GM12878 (cell line): ENCODE measurements at regions of chr6 and their contacts with region 1.

Region 1: GRCh38 chr6:154156135-154156896 is 117.3 kb downstream of the OPRM1 start:
- DNase-seq: no peak
- ATAC-seq: peak; percentile 79
- H3K4me3 ChIP-seq: peak overlapping the region; percentile 35; the same call in 1 of the 2 replicates
- H3K27ac ChIP-seq: peak overlapping the region; percentile 64
- H3K4me1 ChIP-seq: peaks cover 16% of the 10 kb centered on the region
- H3K27me3 ChIP-seq: no peaks in the 10 kb centered on the region; a peak in 1 of 4 replicates
- CTCF ChIP-seq: peak; percentile 55 to 73 (median 64)
- EP300 ChIP-seq: no peak
- POLR2A ChIP-seq: no peak
- RAD21 ChIP-seq: peak; percentile 71

Region 2: GRCh38 chr6:154092326-154092962 is 63.9 kb before region 1 on chr6:
- CTCF ChIA-PET with region 1: no interaction called
- POLR2A ChIA-PET with region 1: no interaction called
- RAD21 ChIA-PET with region 1: no interaction called
- SMC1A ChIA-PET with region 1: no interaction called
- in situ Hi-C with region 1: no loop called
- intact Hi-C with region 1: no loop called
- DNase-seq: no peak
- ATAC-seq: no peak
- H3K4me3 ChIP-seq: no peak overlapping the region
- H3K27ac ChIP-seq: no peak overlapping the region
- H3K4me1 ChIP-seq: no peaks in the 10 kb centered on the region
- H3K27me3 ChIP-seq: no peaks in the 10 kb centered on the region
- CTCF ChIP-seq: no peak
- EP300 ChIP-seq: no peak
- POLR2A ChIP-seq: no peak
- RAD21 ChIP-seq: no peak

Region 3: GRCh38 chr6:154169193-154169847 is 13.0 kb after region 1 on chr6:
- CTCF ChIA-PET with region 1: interaction called, 3 read pairs
- POLR2A ChIA-PET with region 1: no interaction called
- RAD21 ChIA-PET with region 1: interaction called, 6 read pairs
- SMC1A ChIA-PET with region 1: interaction called, 13 read pairs
- in situ Hi-C with region 1: no loop called
- intact Hi-C with region 1: no loop called
- DNase-seq: no peak
- ATAC-seq: no peak; the same call in 2 of the 3 replicates
- H3K4me3 ChIP-seq: no peak overlapping the region
- H3K27ac ChIP-seq: no peak overlapping the region
- H3K4me1 ChIP-seq: peaks cover 6% of the 10 kb centered on the region
- H3K27me3 ChIP-seq: no peaks in the 10 kb centered on the region
- CTCF ChIP-seq: no peak
- EP300 ChIP-seq: no peak
- POLR2A ChIP-seq: no peak
- RAD21 ChIP-seq: no peak

Region 4: DNA sequence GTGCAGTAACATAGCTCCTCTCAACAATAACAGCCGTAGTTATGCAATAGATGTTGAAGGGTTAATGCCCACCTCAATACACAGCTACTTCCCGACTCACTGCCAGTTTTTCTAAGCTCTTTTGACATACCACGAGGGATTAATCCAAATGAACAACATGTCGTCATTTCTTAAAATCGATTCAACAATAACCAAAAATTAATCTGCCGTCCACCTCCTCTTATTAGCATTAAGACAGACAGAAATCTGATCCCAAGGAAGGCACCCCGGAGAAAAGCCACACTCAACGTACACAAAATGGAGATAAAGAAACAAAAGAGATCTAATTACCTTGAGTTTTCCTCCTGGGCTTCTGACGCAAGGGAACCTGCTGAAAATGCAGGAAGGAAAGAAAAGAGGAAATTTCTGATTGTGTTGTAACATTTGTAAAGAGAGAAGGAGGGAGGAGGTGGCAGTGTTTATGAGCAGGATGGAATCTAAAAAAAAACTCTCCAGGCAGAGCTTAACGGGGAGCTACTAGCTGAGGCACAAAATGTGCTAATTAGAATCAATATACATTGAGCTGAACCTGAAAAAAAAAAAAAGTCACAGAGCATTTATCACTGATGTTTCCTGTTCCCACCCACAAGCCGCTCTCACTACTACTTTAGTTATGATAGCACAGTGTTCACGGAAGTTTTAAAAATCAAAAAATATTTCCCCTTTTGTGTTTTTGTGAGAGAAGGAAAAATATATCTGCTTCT is 91.0 kb after region 1 on chr6:
- CTCF ChIA-PET with region 1: interaction called, 11 read pairs
- POLR2A ChIA-PET with region 1: interaction called, 4 read pairs
- RAD21 ChIA-PET with region 1: interaction called, 33 read pairs
- SMC1A ChIA-PET with region 1: interaction called, 59 read pairs
- in situ Hi-C with region 1: no loop called
- intact Hi-C with region 1: loop called (anchors 2 kb)
- DNase-seq: no peak
- ATAC-seq: peak; percentile 59
- H3K4me3 ChIP-seq: peak overlapping the region; percentile 76
- H3K27ac ChIP-seq: peak overlapping the region; percentile 86
- H3K4me1 ChIP-seq: peaks cover 26% of the 10 kb centered on the region
- H3K27me3 ChIP-seq: no peaks in the 10 kb centered on the region
- CTCF ChIP-seq: no peak
- EP300 ChIP-seq: peak; percentile 60 to 73
- POLR2A ChIP-seq: no peak
- RAD21 ChIP-seq: no peak

Region 5: GRCh38 chr6:154258064-154258757 is 101.9 kb after region 1 on chr6:
- CTCF ChIA-PET with region 1: interaction called, 3 read pairs
- POLR2A ChIA-PET with region 1: no interaction called
- RAD21 ChIA-PET with region 1: interaction called, 9 read pairs
- SMC1A ChIA-PET with region 1: interaction called, 14 read pairs
- in situ Hi-C with region 1: no loop called
- intact Hi-C with region 1: no loop called
- DNase-seq: no peak
- ATAC-seq: peak; percentile 77
- H3K4me3 ChIP-seq: no peak overlapping the region
- H3K27ac ChIP-seq: peak overlapping the region; percentile 61
- H3K4me1 ChIP-seq: peaks cover 41% of the 10 kb centered on the region
- H3K27me3 ChIP-seq: no peaks in the 10 kb centered on the region
- CTCF ChIP-seq: no peak
- EP300 ChIP-seq: peak in 1 of 2 experiments; percentile 79; a peak in 3 of 4 replicates
- POLR2A ChIP-seq: no peak
- RAD21 ChIP-seq: no peak

Region 6: GRCh38 chr6:154370545-154370944 is 214.2 kb after region 1 on chr6:
- CTCF ChIA-PET with region 1: interaction called, 18 read pairs
- POLR2A ChIA-PET with region 1: no interaction called
- RAD21 ChIA-PET with region 1: interaction called, 3 read pairs
- SMC1A ChIA-PET with region 1: interaction called, 4 read pairs
- in situ Hi-C with region 1: no loop called
- intact Hi-C with region 1: loop called (anchors 1 kb)
- DNase-seq: no peak
- ATAC-seq: peak; percentile 68
- H3K4me3 ChIP-seq: no peak overlapping the region
- H3K27ac ChIP-seq: no peak overlapping the region
- H3K4me1 ChIP-seq: no peaks in the 10 kb centered on the region
- H3K27me3 ChIP-seq: no peaks in the 10 kb centered on the region; a peak in 1 of 4 replicates
- CTCF ChIP-seq: peak; percentile 38 to 55 (median 41); a peak in 5 of 6 replicates
- EP300 ChIP-seq: no peak
- POLR2A ChIP-seq: no peak
- RAD21 ChIP-seq: peak; percentile 53

Region 7: DNA sequence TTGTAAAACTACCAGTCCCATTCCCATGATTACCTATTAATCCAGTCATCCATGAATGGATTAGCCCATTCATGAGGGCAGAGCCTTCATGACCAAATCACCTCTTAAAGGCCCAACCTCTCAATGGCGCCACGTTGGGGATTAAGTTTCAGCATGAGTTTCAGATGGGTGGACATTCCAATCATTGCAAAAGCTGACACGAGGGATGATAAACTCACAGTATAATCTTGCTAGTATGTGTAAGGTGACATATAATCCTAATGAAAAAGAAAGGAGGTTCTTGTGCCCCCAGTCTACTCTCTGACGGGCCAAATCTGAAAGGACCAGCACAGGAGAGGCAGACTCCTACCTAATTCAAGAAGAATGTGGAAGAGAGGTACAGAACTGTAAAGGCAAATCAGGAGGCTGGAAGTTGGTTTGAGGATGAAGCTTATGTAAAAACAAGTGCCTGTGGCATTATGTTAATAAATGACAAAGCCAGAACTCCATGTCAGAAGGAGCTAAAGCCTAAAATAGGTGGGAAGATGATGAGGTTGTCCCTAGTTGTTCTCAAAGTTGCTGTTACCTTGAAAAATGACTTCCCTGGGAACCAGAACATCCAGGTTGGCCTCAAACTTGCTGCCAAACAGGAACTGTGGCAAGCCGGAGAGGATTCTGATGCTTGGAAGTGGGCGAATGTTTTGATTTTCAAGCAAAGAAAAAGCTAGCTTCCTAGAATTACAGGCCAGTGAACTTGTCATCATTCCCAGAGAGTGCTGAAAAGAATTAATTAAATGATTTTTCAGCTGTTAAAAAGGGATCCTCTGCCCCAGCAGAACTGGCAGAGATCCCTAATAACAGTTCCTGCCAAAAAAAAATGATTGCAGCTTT is 732.3 kb after region 1 on chr6:
- CTCF ChIA-PET with region 1: no interaction called
- POLR2A ChIA-PET with region 1: no interaction called
- RAD21 ChIA-PET with region 1: no interaction called
- SMC1A ChIA-PET with region 1: no interaction called
- in situ Hi-C with region 1: no loop called
- intact Hi-C with region 1: no loop called
- DNase-seq: no peak
- ATAC-seq: no peak
- H3K4me3 ChIP-seq: no peak overlapping the region
- H3K27ac ChIP-seq: no peak overlapping the region
- H3K4me1 ChIP-seq: no peaks in the 10 kb centered on the region
- H3K27me3 ChIP-seq: no peaks in the 10 kb centered on the region
- CTCF ChIP-seq: no peak
- EP300 ChIP-seq: no peak
- POLR2A ChIP-seq: no peak
- RAD21 ChIP-seq: no peak